Naive thymus-derived CD4-positive, alpha-beta T cell (primary cell): ENCODE measurements at regions of chr1 and their contacts with region 1.

Region 1: DNA sequence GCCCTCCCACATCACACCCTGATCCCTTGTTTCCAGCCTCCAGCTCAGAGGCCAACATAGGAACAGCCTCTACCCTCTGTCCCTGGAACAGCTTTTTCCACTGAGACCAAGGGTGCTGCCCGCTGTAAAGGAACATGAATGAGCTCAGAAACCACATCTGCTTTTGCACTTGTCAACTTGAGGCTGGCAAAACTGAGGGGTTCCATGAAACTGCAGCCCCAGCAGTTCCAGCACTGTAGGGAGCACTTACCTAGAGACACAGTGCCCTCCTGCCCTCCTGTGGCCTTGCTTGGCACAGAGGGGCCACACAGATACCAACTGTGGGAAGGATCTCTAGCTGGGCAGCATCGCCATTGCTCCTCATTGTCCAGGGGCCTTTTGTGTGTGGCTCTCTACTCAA is 51.7 kb downstream of the ITPKB start:
- DNase-seq: peak in 7 of 9 donors; percentile 22 to 69 (median 55)
- ATAC-seq: peak; percentile 55
- H3K4me3 ChIP-seq: no peak overlapping the region
- H3K4me3 Mint-ChIP-seq: peak overlapping the region; percentile 4 to 89 (median 66)
- H3K27ac ChIP-seq: peak overlapping the region; percentile 86
- H3K27ac Mint-ChIP-seq: peak overlapping the region; percentile 20 to 100 (median 99)
- H3K4me1 ChIP-seq: peaks cover 80 to 100% of the 10 kb centered on the region in 2 donors
- H3K4me1 Mint-ChIP-seq: peaks cover 86 to 100% (median 100%) of the 10 kb centered on the region in 7 donors
- H3K27me3 ChIP-seq: no peaks in the 10 kb centered on the region
- H3K27me3 Mint-ChIP-seq: no peaks in the 10 kb centered on the region

Region 2: GRCh38 chr1:226603022-226603857 is 84.2 kb before region 1 on chr1:
- CTCF ChIA-PET with region 1: no interaction called
- POLR2A ChIA-PET with region 1: no interaction called
- intact Hi-C with region 1: no loop called
- DNase-seq: no peak
- ATAC-seq: no peak
- H3K4me3 ChIP-seq: no peak overlapping the region
- H3K4me3 Mint-ChIP-seq: no peak overlapping the region
- H3K27ac ChIP-seq: no peak overlapping the region
- H3K27ac Mint-ChIP-seq: no peak overlapping the region
- H3K4me1 ChIP-seq: no peaks in the 10 kb centered on the region
- H3K4me1 Mint-ChIP-seq: peaks cover 0 to 6% (median 0%) of the 10 kb centered on the region in 7 donors
- H3K27me3 ChIP-seq: no peaks in the 10 kb centered on the region
- H3K27me3 Mint-ChIP-seq: peaks cover 0 to 10% (median 5%) of the 10 kb centered on the region in 5 donors

Region 3: DNA sequence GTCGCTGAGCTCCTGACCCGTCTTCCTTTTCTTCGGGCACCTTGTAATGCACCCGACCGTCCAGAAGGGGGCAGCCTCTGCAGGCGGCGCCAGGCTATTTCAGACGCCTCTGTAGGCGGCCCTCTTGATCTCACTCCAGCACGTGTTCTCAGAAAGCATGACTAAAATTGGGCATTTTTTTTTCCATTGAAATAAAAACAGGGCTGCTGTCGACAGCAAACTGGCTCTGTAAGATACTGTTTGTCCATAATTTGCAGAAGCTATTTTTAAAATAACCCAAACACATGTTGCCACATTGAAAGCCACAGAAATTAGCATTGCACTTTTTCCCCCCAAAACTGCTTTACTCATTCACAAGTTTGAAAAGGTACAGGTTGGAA is 60.9 kb before region 1 on chr1:
- CTCF ChIA-PET with region 1: interaction called, 33 read pairs
- POLR2A ChIA-PET with region 1: no interaction called
- intact Hi-C with region 1: loop called in 1 of 2 experiments (anchors 2 kb)
- DNase-seq: peak; percentile 62 to 85 (median 76)
- ATAC-seq: peak; percentile 97
- H3K4me3 ChIP-seq: peak overlapping the region; percentile 25
- H3K4me3 Mint-ChIP-seq: peak overlapping the region; percentile 29 to 72 (median 56)
- H3K27ac ChIP-seq: no peak overlapping the region
- H3K27ac Mint-ChIP-seq: peak overlapping the region in 7 of 9 donors; percentile 43 to 85 (median 67)
- H3K4me1 ChIP-seq: peaks cover 8 to 10% of the 10 kb centered on the region in 2 donors
- H3K4me1 Mint-ChIP-seq: peaks cover 9 to 33% (median 27%) of the 10 kb centered on the region in 7 donors
- H3K27me3 ChIP-seq: no peaks in the 10 kb centered on the region
- H3K27me3 Mint-ChIP-seq: peaks cover 0 to 8% (median 0%) of the 10 kb centered on the region in 5 donors

Region 4: DNA sequence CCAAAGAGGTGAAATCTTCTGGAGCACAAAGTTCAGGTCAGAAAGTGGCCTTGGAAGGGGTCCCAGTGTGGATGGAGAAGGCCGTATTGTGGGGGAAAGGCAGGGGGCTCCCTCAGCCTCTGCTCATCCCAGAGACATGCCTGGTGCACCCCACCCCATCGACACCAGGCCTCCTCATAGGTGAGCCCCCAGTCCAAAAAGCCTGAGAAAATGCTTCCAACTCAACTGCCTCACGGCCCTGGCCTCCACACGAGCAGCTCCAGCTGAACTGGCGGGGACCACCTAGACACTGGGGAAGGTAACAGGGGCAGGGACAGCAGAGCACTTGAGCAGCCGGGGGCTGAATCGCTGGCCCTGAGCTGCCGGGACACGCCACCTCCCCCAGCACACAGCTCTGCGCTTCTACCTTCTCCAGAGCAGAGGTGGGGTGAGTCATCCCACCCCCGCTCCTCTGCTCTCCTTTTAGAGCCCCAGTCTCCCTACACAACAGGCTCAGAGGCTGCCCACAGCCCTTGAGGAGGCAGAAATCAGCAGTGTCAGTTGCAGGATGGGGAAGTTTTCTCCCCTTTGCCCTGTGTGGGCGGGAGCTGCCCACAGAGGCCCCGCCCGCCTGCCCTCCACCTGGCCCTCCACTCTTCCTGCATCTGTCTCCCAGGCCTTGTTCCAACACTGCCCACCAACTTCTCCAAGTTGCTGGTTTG is 44.4 kb before region 1 on chr1:
- CTCF ChIA-PET with region 1: interaction called, 12 read pairs
- POLR2A ChIA-PET with region 1: interaction called, 6 read pairs
- intact Hi-C with region 1: no loop called
- DNase-seq: peak in 2 of 9 donors; percentile 62 to 73
- ATAC-seq: peak; percentile 70
- H3K4me3 ChIP-seq: peak overlapping the region; percentile 24
- H3K4me3 Mint-ChIP-seq: peak overlapping the region; percentile 3 to 87 (median 72)
- H3K27ac ChIP-seq: peak overlapping the region; percentile 69
- H3K27ac Mint-ChIP-seq: peak overlapping the region; percentile 87 to 97 (median 94)
- H3K4me1 ChIP-seq: peaks cover 38 to 53% of the 10 kb centered on the region in 2 donors
- H3K4me1 Mint-ChIP-seq: peaks cover 11 to 85% (median 50%) of the 10 kb centered on the region in 7 donors
- H3K27me3 ChIP-seq: no peaks in the 10 kb centered on the region
- H3K27me3 Mint-ChIP-seq: no peaks in the 10 kb centered on the region

Region 5: DNA sequence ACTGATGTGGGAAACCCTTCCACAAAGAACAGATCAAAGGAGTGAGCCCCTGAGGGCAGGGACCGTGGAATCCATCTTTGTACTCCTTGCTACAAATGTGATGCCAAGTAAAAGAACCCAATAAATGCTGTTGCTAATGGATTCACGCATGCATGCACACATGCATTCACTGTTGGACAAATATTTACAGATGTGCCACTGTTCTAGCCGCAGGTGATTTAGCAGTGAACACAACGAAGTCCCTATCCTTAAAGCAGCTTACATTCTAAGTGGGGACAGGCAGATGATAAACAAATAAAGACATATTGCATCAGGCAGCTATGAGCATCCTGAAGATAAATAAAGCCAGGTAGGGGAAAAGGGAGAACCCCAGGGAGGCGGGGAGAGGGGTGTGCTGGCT is 16.1 kb before region 1 on chr1:
- CTCF ChIA-PET with region 1: no interaction called
- POLR2A ChIA-PET with region 1: interaction called, 31 read pairs
- intact Hi-C with region 1: loop called in 1 of 2 experiments (anchors 1 kb)
- DNase-seq: no peak
- ATAC-seq: no peak
- H3K4me3 ChIP-seq: no peak overlapping the region
- H3K4me3 Mint-ChIP-seq: peak overlapping the region in 9 of 10 donors; percentile 37 to 89 (median 55)
- H3K27ac ChIP-seq: peak overlapping the region; percentile 86
- H3K27ac Mint-ChIP-seq: peak overlapping the region in 8 of 9 donors; percentile 91 to 100 (median 99)
- H3K4me1 ChIP-seq: peaks cover 67 to 72% of the 10 kb centered on the region in 2 donors
- H3K4me1 Mint-ChIP-seq: peaks cover 63 to 77% (median 63%) of the 10 kb centered on the region in 7 donors
- H3K27me3 ChIP-seq: no peaks in the 10 kb centered on the region
- H3K27me3 Mint-ChIP-seq: peaks cover 0 to 2% (median 0%) of the 10 kb centered on the region in 5 donors

Region 6: DNA sequence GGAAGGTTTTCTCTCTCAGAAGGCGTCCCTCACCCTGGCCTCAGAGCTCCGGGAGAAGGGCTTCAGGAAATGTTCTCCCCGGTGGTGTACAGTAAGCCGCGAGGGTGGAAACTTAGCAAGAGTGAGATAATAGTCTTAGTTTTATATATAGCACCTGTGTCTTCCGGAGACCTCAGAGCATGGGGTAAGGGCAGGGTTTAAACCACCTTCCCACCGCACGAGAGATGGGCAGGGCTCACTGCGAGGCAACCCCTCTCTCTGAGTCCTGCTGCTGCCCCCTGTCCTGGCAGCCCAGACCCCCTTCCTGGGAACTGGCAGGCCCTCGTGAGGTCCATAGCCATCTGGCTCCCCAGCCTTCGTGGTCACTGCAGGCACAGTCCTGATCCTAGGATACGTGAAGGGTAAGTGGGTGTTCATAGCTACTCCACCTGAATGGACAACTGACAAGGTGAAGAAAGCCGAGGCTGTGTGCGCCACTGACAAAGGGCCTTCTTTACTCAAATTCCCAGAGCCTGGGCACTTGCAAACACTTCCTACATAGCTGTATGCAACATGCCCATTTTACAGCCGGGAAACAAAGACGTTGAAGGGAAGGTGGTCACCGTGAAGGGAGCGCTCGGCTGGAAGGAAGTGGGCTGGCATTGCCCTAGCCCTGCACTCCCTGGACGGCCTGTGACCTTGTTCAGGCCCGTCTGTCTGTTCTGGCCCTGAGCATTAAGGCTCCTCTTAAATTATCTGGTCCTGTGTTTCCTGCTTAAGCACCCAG is 24.7 kb after region 1 on chr1:
- CTCF ChIA-PET with region 1: interaction called, 3 read pairs
- POLR2A ChIA-PET with region 1: interaction called, 15 read pairs
- intact Hi-C with region 1: no loop called
- DNase-seq: peak in 7 of 9 donors; percentile 52 to 76 (median 61)
- ATAC-seq: peak; percentile 69
- H3K4me3 ChIP-seq: peak overlapping the region; percentile 43
- H3K4me3 Mint-ChIP-seq: peak overlapping the region; percentile 68 to 92 (median 82)
- H3K27ac ChIP-seq: peak overlapping the region; percentile 75
- H3K27ac Mint-ChIP-seq: peak overlapping the region; percentile 79 to 100 (median 95)
- H3K4me1 ChIP-seq: peaks cover 69 to 88% of the 10 kb centered on the region in 2 donors
- H3K4me1 Mint-ChIP-seq: peaks cover 72 to 100% (median 99%) of the 10 kb centered on the region in 7 donors
- H3K27me3 ChIP-seq: no peaks in the 10 kb centered on the region
- H3K27me3 Mint-ChIP-seq: no peaks in the 10 kb centered on the region